ENCODE measurements at regions of chr16 and their contacts with region 1.

Region 1: GRCh38 chr16:27374804-27375425 is 27.1 kb upstream of the IL21R start:
- DNase-seq: peak; percentile 83
- H3K4me3 Mint-ChIP-seq: no peak overlapping the region
- H3K27ac Mint-ChIP-seq: no peak overlapping the region
- H3K4me1 Mint-ChIP-seq: peaks cover 36% of the 10 kb centered on the region
- H3K27me3 Mint-ChIP-seq: no peaks in the 10 kb centered on the region

Region 2: DNA sequence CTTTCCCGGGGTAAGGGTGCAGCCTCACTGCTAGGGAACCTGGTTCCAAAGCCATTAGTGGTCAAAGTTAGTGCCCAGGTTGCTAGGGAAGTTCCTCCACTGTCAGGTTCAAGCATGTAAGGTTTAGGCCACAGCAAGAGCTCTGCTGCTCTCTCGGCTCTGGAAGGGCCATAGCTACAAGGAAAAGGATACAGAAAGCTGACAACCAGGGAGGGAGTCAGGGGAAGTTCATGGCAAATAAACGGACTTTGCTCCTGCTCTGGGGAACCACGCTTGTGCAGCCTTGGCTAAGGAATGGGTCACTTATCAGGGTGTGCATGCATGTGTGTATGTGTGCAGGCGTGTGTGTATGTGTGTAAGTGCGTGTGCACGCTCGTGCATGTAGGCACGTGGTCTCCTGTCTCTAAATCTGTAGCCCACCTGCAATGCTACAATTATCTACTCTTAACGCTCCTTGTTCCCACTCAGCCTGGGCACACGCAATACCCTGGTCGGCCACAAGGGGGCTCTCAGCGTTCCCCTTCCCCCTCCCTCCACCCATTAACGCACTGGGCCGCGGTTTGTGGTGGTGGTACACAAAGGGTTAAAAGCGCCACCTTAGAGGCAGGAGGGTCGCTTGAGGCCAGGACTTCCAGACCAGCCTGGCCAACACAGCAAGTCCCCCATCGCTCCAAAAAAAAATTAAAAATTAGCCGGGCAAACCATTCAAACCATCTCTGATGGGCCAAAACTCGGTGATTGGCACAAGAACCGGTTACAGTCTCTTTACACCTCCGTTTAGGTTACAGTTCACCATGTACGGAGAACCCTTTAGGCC is 220.0 kb before region 1 on chr16:
- CTCF ChIA-PET with region 1: interaction called, 11 read pairs
- POLR2A ChIA-PET with region 1: no interaction called
- intact Hi-C with region 1: no loop called
- DNase-seq: peak; percentile 78
- H3K4me3 Mint-ChIP-seq: no peak overlapping the region
- H3K27ac Mint-ChIP-seq: no peak overlapping the region
- H3K4me1 Mint-ChIP-seq: peaks cover 6% of the 10 kb centered on the region
- H3K27me3 Mint-ChIP-seq: no peaks in the 10 kb centered on the region

Region 3: DNA sequence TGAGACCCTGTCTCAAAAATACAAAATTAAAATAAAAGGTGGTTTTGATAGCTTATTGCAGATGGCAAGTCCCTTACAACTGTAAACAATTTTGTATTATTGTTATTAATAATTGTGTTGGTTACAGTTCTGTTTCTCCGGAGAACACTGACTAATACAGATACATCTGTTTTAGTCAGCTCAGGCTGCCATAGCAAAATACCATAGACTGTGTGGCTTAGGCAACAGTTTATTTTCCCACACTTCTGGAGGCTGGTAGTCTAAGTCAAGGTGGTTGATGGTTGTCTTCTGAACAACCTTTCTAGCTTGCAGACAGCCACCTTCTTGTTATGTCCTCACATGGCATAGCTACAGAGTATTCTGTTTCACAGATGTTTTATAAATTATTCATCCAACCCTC is 12.8 kb after region 1 on chr16:
- CTCF ChIA-PET with region 1: interaction called, 3 read pairs
- POLR2A ChIA-PET with region 1: interaction called, 13 read pairs
- intact Hi-C with region 1: no loop called
- DNase-seq: no peak
- H3K4me3 Mint-ChIP-seq: no peak overlapping the region
- H3K27ac Mint-ChIP-seq: peak overlapping the region; percentile 39
- H3K4me1 Mint-ChIP-seq: peaks cover 18% of the 10 kb centered on the region
- H3K27me3 Mint-ChIP-seq: no peaks in the 10 kb centered on the region

Region 4: GRCh38 chr16:27426423-27427408 is 51.8 kb after region 1 on chr16:
- CTCF ChIA-PET with region 1: interaction called, 3 read pairs
- POLR2A ChIA-PET with region 1: interaction called, 3 read pairs
- intact Hi-C with region 1: loop called (anchors 2 kb)
- DNase-seq: peak; percentile 91
- H3K4me3 Mint-ChIP-seq: peak overlapping the region; percentile 45
- H3K27ac Mint-ChIP-seq: peak overlapping the region; percentile 87
- H3K4me1 Mint-ChIP-seq: peaks cover 76% of the 10 kb centered on the region
- H3K27me3 Mint-ChIP-seq: no peaks in the 10 kb centered on the region

Measured in activated CD4-positive, alpha-beta memory T cell treated with anti-CD3 and anti-CD28 coated beads for 36 hours (primary cell).